B cell (primary cell): ENCODE measurements at regions of chr19 and their contacts with region 1.

Region 1: DNA sequence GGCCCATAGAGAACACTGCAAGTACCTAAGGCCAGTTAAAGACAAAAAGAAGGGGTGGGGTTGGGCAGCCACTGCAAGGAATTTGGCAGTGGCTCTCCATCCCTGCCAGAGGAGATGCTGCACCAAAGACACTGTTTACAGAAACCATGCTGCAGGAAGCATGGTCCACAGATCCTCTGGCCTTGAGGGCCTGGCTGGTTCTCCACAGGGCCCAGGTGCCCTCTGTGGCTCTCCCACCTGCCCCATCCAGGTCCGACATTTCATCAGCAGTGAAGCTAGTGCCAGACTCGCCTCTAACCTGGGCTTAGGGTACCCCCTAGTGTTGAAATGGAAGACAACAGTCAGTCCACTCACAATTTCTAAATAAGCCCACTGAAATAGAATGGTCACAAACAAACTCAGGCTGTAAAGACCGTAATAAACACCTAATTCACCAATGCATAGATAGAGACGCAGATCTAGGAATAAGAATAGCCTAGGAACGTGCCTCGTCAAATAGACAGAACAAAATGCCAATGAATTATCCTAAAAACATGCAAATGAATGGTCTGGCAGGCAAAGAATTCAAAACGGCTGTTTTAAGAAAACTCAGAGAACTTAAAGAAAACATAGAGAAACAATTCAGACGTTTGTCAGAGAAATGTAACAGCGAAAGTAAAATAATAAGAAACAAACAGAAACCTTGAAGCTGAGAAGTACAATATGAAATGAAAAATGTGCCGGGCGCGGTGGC is 23.3 kb downstream of the LYPD4 start:
- DNase-seq: peak; percentile 82
- ATAC-seq: peak; percentile 82
- H3K4me3 ChIP-seq: no peak overlapping the region
- H3K4me3 Mint-ChIP-seq: no peak overlapping the region
- H3K27ac ChIP-seq: no peak overlapping the region
- H3K27ac Mint-ChIP-seq: no peak overlapping the region
- H3K4me1 ChIP-seq: no peaks in the 10 kb centered on the region
- H3K4me1 Mint-ChIP-seq: peaks cover 3% of the 10 kb centered on the region
- H3K27me3 ChIP-seq: peaks cover 0 to 3% (median 0%) of the 10 kb centered on the region in 4 experiments
- H3K27me3 Mint-ChIP-seq: peaks cover 19% of the 10 kb centered on the region
- CTCF ChIP-seq: peak; percentile 89

Region 2: DNA sequence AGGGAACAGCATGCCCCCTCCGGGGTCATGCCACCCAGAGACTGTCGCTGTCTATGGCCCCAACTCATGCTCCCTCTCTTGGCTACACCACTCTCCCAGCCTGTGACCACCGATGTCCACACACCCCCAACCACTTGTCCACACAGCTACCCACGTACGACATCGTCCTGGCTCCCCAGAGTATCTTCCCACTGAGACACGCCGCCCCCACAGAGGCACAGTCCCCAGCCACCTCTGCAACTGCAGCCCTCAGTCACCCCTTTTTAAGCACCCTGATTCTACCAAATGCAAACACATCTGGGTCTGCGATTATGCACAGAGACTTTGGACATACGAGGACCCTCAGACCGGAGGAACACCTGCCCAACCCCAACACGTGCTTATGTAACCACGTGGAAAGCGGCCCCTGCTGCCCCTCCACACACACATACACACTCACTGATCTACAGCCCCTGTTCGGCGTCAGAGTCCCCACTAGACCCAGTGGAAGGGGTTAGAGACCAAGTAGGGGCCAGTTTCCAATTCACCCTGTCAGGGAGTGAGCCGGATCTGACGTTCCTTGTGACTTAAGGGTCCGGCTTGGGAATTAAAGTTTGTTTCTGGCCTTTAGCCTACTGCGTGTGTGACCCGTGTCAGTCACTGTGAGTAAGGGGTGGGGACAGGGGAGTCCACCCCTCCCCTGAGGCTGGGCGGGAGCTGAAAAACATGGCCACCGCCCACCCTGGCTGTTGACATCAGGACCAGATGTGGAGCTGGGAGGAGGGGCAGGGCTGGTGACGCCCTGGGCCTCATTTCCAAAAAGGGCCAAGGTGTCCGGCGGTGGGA is 614.0 kb before region 1 on chr19:
- CTCF ChIA-PET with region 1: no interaction called
- POLR2A ChIA-PET with region 1: no interaction called
- intact Hi-C with region 1: no loop called
- DNase-seq: no peak
- ATAC-seq: no peak
- H3K4me3 ChIP-seq: no peak overlapping the region
- H3K4me3 Mint-ChIP-seq: no peak overlapping the region
- H3K27ac ChIP-seq: no peak overlapping the region
- H3K27ac Mint-ChIP-seq: no peak overlapping the region
- H3K4me1 ChIP-seq: no peaks in the 10 kb centered on the region
- H3K4me1 Mint-ChIP-seq: no peaks in the 10 kb centered on the region
- H3K27me3 ChIP-seq: no peaks in the 10 kb centered on the region
- H3K27me3 Mint-ChIP-seq: no peaks in the 10 kb centered on the region
- CTCF ChIP-seq: no peak

Region 3: GRCh38 chr19:41753936-41754529 is 67.1 kb before region 1 on chr19:
- CTCF ChIA-PET with region 1: interaction called, 73 read pairs
- POLR2A ChIA-PET with region 1: no interaction called
- intact Hi-C with region 1: loop called (anchors 1 kb)
- DNase-seq: peak; percentile 76
- ATAC-seq: peak; percentile 94
- H3K4me3 ChIP-seq: no peak overlapping the region
- H3K4me3 Mint-ChIP-seq: no peak overlapping the region
- H3K27ac ChIP-seq: no peak overlapping the region
- H3K27ac Mint-ChIP-seq: no peak overlapping the region
- H3K4me1 ChIP-seq: peaks cover 0 to 8% of the 10 kb centered on the region in 2 donors
- H3K4me1 Mint-ChIP-seq: peaks cover 1% of the 10 kb centered on the region
- H3K27me3 ChIP-seq: peaks cover 0 to 7% (median 0%) of the 10 kb centered on the region in 4 experiments
- H3K27me3 Mint-ChIP-seq: peaks cover 11% of the 10 kb centered on the region
- CTCF ChIP-seq: peak; percentile 76

Region 4: GRCh38 chr19:41795031-41795461 is 26.1 kb before region 1 on chr19:
- CTCF ChIA-PET with region 1: interaction called, 249 read pairs
- POLR2A ChIA-PET with region 1: interaction called, 3 read pairs
- intact Hi-C with region 1: loop called (anchors 1 kb)
- DNase-seq: peak; percentile 74
- ATAC-seq: peak; percentile 92
- H3K4me3 ChIP-seq: no peak overlapping the region
- H3K4me3 Mint-ChIP-seq: no peak overlapping the region
- H3K27ac ChIP-seq: no peak overlapping the region
- H3K27ac Mint-ChIP-seq: peak overlapping the region; percentile 2
- H3K4me1 ChIP-seq: peaks cover 0 to 2% of the 10 kb centered on the region in 2 donors
- H3K4me1 Mint-ChIP-seq: peaks cover 6% of the 10 kb centered on the region
- H3K27me3 ChIP-seq: peaks cover 0 to 8% (median 3%) of the 10 kb centered on the region in 4 experiments
- H3K27me3 Mint-ChIP-seq: peaks cover 25% of the 10 kb centered on the region
- CTCF ChIP-seq: peak; percentile 91

Region 5: GRCh38 chr19:41811036-41811435 is 10.1 kb before region 1 on chr19:
- CTCF ChIA-PET with region 1: interaction called, 12 read pairs
- POLR2A ChIA-PET with region 1: no interaction called
- intact Hi-C with region 1: no loop called
- DNase-seq: peak; percentile 66
- ATAC-seq: peak; percentile 10
- H3K4me3 ChIP-seq: no peak overlapping the region
- H3K4me3 Mint-ChIP-seq: no peak overlapping the region
- H3K27ac ChIP-seq: no peak overlapping the region
- H3K27ac Mint-ChIP-seq: peak overlapping the region; percentile 20
- H3K4me1 ChIP-seq: peaks cover 10 to 25% of the 10 kb centered on the region in 2 donors
- H3K4me1 Mint-ChIP-seq: peaks cover 20% of the 10 kb centered on the region
- H3K27me3 ChIP-seq: no peaks in the 10 kb centered on the region
- H3K27me3 Mint-ChIP-seq: no peaks in the 10 kb centered on the region
- CTCF ChIP-seq: no peak